Aorta (tissue), 5 donors: ENCODE measurements at regions of chr2 and their contacts with region 1.

Region 1: DNA sequence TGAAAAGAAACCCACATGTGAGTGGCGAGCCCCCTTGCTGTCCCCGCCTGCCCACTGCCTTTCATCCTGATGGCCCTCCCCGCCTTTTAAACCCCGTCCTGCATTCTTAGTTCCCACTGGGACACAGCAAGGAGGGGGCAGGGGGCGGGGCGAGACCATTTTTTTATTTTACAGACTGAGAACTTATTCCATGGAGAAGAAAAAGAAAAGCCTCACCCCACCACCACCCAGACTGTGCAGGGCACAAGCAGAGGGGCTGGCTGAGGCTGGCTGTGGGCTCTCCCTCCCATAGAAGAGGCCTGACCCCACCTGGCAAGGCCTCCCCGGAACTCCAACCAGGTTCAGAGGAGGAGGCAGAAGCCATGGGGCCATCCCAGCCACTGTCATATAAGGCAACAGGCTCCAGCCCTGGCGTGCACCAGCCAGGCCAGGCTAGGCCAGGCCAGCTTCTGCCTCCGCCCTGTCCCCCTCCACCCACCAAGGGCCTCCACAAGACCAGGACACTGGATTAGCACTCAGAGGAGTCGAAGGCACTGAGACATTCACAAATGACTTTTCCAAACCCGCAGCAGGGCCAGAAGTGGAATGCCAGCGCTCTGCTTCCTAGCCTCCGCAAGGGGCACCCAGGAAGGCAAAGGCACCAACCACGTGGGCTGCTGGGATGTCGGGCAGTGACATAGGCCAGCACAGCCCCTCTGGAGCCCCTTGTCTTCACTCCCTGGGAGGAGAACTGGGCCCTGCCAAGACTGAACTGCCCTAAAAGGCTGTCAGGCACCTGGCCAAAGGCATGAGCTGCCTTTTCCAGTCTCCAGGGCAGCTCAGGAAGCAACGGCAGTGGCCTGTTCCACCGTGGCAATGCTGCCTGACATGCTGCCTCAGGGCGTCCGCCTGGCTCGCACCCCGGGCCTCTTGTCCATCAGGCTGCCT is 37.5 kb upstream of the SEMA4C start:
- DNase-seq: peak; percentile 92 to 93
- ATAC-seq: peak; percentile 95
- H3K4me3 ChIP-seq: no peak overlapping the region
- H3K27ac ChIP-seq: peak overlapping the region; percentile 52 to 92
- H3K4me1 ChIP-seq: peaks cover 0 to 3% of the 10 kb centered on the region in 2 donors
- H3K27me3 ChIP-seq: no peaks in the 10 kb centered on the region

Region 2: DNA sequence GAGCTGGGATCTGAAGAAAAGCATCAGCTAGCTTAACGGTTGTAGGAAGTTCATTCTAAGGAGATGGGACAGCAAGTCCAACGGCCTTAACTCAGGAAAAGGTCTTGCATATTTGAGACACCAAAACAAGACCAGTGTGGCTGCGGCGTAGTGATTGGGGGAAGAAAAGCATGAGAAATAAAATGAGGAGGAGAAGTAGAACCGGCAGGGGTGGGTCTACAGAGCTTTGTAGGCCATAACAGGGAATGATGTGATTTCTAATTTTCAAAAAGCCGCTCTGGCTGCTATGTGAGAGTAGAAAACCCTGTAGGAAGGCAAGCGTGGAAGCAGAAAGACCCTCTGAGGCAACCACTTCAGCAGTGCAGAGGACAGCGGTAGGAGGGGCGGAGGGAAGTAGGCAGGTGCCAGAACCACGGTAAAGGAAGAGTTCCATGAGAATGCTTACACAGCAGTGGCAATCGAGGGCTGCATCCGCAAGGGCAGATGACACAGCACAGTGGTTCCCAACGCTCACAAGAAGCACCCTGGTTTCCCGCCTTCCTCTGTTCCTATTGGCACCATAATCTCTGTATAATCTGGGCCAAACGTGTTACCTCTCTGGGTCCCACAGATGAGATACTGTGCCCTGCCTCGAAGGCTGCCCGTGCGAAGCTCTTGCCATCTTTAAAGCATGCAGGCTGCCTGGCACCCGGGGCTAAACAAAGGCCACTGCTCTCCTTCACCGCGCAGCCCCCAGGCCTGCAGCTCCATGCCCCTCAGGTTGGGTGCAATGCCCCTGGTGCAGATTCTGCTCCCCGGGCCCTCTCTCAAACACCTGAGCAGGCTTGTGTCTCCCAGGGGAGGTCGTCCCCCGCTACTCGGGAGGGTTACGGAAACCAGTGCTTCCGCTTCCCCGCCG is 50.4 kb before region 1 on chr2:
- intact Hi-C with region 1: loop called (anchors 1 to 5 kb)
- DNase-seq: peak; percentile 52 to 77
- ATAC-seq: no peak
- H3K4me3 ChIP-seq: peak overlapping the region; percentile 22 to 53
- H3K27ac ChIP-seq: no peak overlapping the region
- H3K4me1 ChIP-seq: no peaks in the 10 kb centered on the region
- H3K27me3 ChIP-seq: no peaks in the 10 kb centered on the region

Region 3: GRCh38 chr2:96868555-96869280 is 38.7 kb before region 1 on chr2:
- intact Hi-C with region 1: loop called (anchors 1 kb)
- DNase-seq: peak; percentile 94 to 95
- ATAC-seq: peak; percentile 83
- H3K4me3 ChIP-seq: peak overlapping the region; percentile 89 to 96
- H3K27ac ChIP-seq: peak overlapping the region; percentile 81 to 84
- H3K4me1 ChIP-seq: no peaks in the 10 kb centered on the region
- H3K27me3 ChIP-seq: no peaks in the 10 kb centered on the region

Region 4: DNA sequence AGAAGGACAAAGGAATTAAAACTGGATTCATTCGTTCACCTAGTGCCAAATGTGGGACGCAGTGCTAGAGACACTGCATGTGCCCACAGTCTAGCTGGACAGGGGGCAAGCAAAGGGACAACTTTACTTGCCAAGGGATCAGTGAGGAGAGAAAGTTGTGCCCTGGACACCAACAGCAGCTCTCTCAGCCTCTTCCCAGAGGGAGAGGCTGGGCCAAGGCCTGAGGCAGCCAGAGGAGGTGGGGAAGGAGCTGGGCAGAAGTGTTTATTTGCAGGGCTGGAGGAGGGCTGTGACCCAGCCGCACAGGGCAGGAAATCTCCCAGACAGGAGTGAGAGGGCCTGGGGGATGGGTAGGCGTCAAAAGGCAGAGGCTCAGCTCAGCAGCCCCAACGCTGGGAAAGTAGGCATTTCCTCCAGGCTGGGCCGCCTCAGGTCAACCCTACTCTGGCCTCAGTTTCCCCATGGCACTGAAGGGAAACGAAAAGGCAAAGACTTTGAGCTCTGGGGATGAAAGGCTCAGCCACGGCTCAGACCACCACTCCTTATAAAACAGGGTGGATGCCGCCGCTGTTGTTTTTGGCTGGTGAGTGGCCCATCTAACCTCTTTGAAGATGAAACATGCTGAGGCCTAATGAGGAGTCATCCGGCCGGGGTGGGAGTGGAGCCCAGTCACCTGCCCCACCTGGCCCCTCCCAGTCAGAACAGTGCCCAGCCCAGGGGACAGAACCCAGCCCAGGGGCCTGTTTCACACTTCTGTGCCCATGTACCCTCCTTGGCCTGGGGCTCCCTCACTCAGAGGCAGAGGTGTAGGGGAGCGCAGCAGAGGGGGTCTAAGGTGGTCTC is 15.7 kb before region 1 on chr2:
- intact Hi-C with region 1: loop called in 1 of 2 experiments (anchors 1 kb)
- DNase-seq: peak in 1 of 2 donors; percentile 82
- ATAC-seq: peak; percentile 66
- H3K4me3 ChIP-seq: no peak overlapping the region
- H3K27ac ChIP-seq: peak overlapping the region in 1 of 2 donors; percentile 58
- H3K4me1 ChIP-seq: no peaks in the 10 kb centered on the region
- H3K27me3 ChIP-seq: no peaks in the 10 kb centered on the region

Region 5: DNA sequence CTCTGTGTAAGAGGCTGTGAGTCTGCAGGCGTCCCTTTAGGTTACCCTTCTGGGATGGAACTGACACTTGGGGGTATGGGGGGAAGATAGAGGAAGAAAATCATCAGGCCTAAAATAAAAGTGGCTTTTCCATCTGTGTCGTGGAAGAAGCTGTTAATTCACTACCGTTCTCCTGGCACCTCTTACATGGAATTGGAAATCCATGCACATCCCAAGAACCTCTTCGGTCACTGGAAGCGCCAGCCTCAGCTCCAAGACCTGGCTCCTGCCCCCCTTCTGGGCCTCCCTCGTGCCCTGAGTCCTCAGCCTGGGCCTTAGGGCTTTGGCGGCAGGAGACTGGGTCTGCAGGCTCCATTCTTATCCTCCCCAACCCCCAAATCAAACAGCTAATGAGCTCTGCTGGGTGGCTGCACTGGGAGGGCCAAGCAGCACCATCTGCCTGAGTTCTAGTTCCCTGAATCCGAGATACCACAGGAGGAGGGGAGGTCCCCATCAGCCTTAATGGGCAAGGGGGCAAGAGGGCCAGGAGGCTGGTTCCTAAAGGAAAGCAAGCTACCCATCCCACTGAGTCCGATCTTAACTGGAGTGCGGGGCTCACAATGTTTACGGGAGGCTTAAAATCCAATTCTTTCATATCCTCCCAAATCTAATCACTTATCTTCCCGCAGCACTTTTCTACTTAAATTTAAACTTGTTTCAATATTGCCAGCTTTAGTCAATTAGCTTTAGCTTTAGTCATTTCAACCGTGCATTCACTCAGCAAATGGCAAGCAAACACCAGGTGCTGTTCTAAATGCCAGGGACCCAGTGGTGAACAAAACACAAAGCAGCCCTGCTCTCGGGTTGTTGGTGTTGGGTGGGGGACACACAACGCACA is 26.2 kb after region 1 on chr2:
- intact Hi-C with region 1: no loop called
- DNase-seq: peak in 1 of 2 donors; percentile 29
- ATAC-seq: no peak
- H3K4me3 ChIP-seq: no peak overlapping the region
- H3K27ac ChIP-seq: no peak overlapping the region
- H3K4me1 ChIP-seq: no peaks in the 10 kb centered on the region
- H3K27me3 ChIP-seq: no peaks in the 10 kb centered on the region

Region 6: DNA sequence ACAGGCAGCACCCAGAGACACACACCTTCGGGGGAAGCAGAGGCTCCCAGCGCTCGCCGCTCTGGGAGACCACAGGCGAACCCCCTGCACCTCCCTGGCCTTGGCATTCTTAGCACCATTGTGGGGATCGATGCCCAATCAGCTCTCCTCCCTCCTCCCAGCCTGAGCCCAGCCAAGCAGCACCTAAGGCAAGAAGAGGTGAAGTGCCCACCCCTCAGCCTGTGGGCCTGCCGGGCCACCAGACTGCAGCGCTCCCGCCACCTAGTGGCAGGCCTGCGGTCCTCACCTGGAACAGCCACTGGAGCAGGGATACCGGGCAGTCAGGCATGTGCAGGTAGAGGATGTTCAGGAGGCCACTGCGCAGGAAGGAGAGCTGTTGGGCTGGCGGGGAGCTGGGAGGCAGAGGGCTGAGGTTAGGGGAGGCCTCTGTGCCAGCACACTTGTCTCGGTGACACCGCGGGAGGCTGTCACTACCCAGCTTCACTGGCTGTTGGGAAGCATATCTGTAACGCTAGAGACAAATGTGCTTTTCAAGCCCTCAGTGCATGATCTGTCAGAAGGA is 43.8 kb after region 1 on chr2:
- intact Hi-C with region 1: loop called (anchors 5 kb)
- DNase-seq: peak; percentile 79 to 91
- ATAC-seq: peak; percentile 86
- H3K4me3 ChIP-seq: no peak overlapping the region
- H3K27ac ChIP-seq: no peak overlapping the region
- H3K4me1 ChIP-seq: no peaks in the 10 kb centered on the region
- H3K27me3 ChIP-seq: no peaks in the 10 kb centered on the region